ENCODE measurements at regions of chr18 and their contacts with region 1.

Region 1: DNA sequence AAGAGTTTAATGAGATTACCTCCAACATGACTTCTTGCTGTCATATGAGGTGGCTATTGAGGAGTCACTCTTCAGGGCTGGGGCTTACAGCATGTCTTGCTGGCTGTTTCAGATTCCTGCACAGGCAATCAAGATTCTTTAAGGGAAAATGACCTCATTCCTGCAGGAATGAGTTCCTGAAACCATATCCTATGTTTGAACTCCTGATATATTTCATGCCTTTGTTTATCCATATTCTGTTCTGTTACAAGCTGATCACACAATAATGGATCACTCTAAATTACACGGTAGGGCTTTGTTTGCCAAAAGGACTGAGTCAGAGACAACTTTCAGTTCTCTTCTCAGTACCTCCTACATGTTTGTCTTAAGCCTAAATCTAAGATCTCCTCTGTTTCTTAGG is 879.8 kb upstream of the PIK3C3 start:
- DNase-seq: no peak
- ATAC-seq: peak; percentile 88
- H3K4me3 ChIP-seq: no peak overlapping the region
- H3K27ac ChIP-seq: no peak overlapping the region
- H3K4me1 ChIP-seq: no peaks in the 10 kb centered on the region
- H3K27me3 ChIP-seq: no peaks in the 10 kb centered on the region
- CTCF ChIP-seq: no peak
- EP300 ChIP-seq: no peak
- POLR2A ChIP-seq: no peak
- RAD21 ChIP-seq: no peak

Region 2: GRCh38 chr18:41058351-41059125 is 16.7 kb before region 1 on chr18:
- CTCF ChIA-PET with region 1: no interaction called
- POLR2A ChIA-PET with region 1: no interaction called
- RAD21 ChIA-PET with region 1: no interaction called
- SMC1A ChIA-PET with region 1: interaction called, 10 read pairs
- in situ Hi-C with region 1: no loop called
- intact Hi-C with region 1: no loop called
- DNase-seq: no peak
- ATAC-seq: no peak
- H3K4me3 ChIP-seq: no peak overlapping the region
- H3K27ac ChIP-seq: no peak overlapping the region
- H3K4me1 ChIP-seq: no peaks in the 10 kb centered on the region
- H3K27me3 ChIP-seq: no peaks in the 10 kb centered on the region
- CTCF ChIP-seq: no peak
- EP300 ChIP-seq: no peak
- POLR2A ChIP-seq: no peak
- RAD21 ChIP-seq: no peak